MCF 10A (cell line): ENCODE measurements at regions of chr5 and their contacts with region 1.

Region 1: GRCh38 chr5:100535060-100536005 is at the start of gene FAM174A:
- DNase-seq: peak; percentile 97
- H3K4me3 Mint-ChIP-seq: peak within 1 kb of the TSS; percentile 81
- H3K27ac Mint-ChIP-seq: peak within 1 kb of the TSS; percentile 92
- H3K4me1 Mint-ChIP-seq: peaks cover 25% of the 10 kb centered on the region
- H3K27me3 Mint-ChIP-seq: no peaks in the 10 kb centered on the region
- CTCF ChIP-seq: no peak
- total RNA-seq, gene FAM174A: 9.7 and 15.4 TPM in 2 replicates

Region 2: DNA sequence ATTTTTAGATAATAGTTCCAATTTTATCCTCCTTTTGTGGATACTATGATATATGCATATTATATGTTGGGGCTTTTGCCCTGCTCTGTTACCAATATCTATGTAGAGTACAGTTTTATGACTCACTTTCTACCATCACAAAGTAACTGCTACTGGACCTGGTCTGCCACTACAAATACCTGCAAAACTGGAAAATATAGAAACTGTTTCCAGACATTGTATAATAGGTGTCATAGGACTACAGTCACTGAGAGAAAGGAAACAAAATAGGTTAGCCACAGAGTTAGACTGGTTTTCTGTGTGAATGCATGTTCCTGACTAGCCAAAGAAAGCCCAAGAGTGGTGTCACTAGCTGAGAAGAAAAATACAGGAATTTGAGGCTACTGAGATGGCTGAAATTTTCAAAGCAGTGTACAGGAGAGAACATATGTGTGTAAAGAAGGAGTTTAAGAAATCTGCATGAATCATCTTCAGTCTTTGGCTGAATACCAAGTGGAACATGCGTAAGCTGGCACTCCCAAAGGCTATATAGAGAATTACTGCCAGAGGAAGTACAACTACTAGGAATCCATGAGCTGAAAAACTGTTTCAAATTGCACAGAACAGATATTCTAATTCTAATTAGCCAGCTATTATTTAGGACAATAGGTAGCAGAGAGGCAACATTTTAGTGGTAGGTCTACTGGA is 29.2 kb before region 1 on chr5:
- CTCF ChIA-PET with region 1: no interaction called
- POLR2A ChIA-PET with region 1: interaction called, 10 read pairs
- intact Hi-C with region 1: no loop called
- DNase-seq: peak; percentile 95
- H3K4me3 Mint-ChIP-seq: peak overlapping the region; percentile 47
- H3K27ac Mint-ChIP-seq: peak overlapping the region; percentile 90
- H3K4me1 Mint-ChIP-seq: peaks cover 20% of the 10 kb centered on the region
- H3K27me3 Mint-ChIP-seq: no peaks in the 10 kb centered on the region
- CTCF ChIP-seq: no peak